HEK293 (cell line): ENCODE measurements at regions of chr4 and their contacts with region 1.

Region 1: GRCh38 chr4:157045507-157046127 is 30.3 kb upstream of the GLRB start:
- H3K4me3 ChIP-seq: no peak overlapping the region
- H3K27ac ChIP-seq: no peak overlapping the region
- H3K4me1 ChIP-seq: no peaks in the 10 kb centered on the region
- CTCF ChIP-seq: peak; percentile 33; the same call in 1 of the 2 replicates

Region 2: DNA sequence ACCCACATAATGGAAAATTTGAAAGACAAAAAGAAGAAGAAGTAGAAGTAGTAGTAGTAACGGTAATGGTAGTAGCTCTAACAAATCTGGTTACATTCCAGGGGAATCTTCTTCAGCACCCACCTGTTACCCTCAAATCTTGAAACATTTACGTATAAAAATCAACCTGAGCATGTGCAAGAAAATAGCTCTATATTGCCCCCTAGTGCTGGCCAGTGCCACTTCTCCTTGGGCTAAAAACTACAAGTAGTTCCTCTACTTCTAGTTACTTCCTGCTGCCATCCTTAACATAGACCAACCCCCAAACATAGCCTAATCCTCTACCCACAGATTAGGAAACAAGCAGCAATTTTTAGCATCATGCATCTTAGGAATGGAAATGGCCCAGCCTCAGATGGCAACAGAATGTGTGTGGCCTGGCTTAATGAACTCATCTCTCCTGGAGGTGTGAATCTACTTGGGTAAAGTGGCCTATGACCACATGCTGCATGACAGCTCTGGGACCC is 77.1 kb before region 1 on chr4:
- CTCF ChIA-PET with region 1: interaction called, 20 read pairs
- POLR2A ChIA-PET with region 1: interaction called, 3 read pairs
- H3K4me3 ChIP-seq: peak overlapping the region; percentile 9
- H3K27ac ChIP-seq: peak overlapping the region; percentile 1; the same call in 1 of the 2 replicates
- H3K4me1 ChIP-seq: peaks cover 10% of the 10 kb centered on the region
- CTCF ChIP-seq: peak; percentile 47; the same call in 1 of the 2 replicates